Endothelial cell of umbilical vein (primary cell): ENCODE measurements at regions of chr12 and their contacts with region 1.

Region 1: DNA sequence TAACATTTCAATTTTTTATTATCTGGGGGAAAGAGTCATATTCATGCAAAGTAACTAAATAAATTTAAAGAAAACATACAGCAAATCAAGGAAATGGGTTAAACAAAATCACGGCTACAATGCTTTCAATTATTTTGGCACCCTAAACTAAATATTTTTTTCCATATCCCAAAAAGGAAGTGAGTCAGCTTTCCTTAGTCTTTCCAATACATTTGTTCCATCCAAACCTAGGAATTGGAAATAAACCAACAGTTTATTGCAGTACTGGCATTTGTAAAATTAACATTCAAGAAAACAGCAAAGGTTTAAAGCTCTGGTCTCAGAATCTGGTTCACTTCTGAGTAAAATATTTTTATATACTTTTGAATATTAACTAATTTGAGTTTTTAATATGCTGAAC is 89.2 kb downstream of the BCL2L14 start:
- DNase-seq: peak; percentile 82
- H3K4me3 ChIP-seq: peak overlapping the region in 1 of 3 experiments; percentile 6
- H3K27ac ChIP-seq: no peak overlapping the region
- H3K4me1 ChIP-seq: peaks cover 17% of the 10 kb centered on the region
- H3K27me3 ChIP-seq: no peaks in the 10 kb centered on the region
- CTCF ChIP-seq: no peak
- POLR2A ChIP-seq: no peak

Region 2: GRCh38 chr12:11568762-11569478 is 591.1 kb before region 1 on chr12:
- CTCF ChIA-PET with region 1: no interaction called
- POLR2A ChIA-PET with region 1: interaction called, 12 read pairs
- dilution Hi-C with region 1: no loop called
- intact Hi-C with region 1: no loop called
- DNase-seq: no peak
- H3K4me3 ChIP-seq: no peak overlapping the region
- H3K27ac ChIP-seq: no peak overlapping the region
- H3K4me1 ChIP-seq: no peaks in the 10 kb centered on the region
- H3K27me3 ChIP-seq: peaks cover 0 to 2% of the 10 kb centered on the region in 2 experiments
- CTCF ChIP-seq: no peak
- POLR2A ChIP-seq: no peak

Region 3: DNA sequence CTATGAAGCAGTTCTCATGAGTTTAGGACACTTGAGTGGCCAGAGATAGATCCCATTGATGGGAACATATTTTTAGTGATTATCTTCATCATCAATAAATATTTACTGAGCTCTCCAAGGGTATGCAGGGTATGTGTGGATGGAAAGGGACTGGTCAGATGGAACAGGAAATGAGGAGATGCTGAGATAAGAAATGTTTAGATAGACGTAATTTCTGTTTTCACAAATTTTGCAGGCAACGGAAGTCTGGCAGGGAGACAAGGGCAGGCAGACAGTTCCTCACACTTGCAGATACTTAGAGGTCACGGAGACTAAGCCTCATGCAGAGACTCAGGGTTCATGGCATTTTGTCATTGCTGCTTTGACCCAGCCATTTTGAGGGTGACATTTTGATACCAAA is 65.0 kb before region 1 on chr12:
- CTCF ChIA-PET with region 1: no interaction called
- POLR2A ChIA-PET with region 1: no interaction called
- dilution Hi-C with region 1: no loop called
- intact Hi-C with region 1: loop called (anchors 5 kb)
- DNase-seq: peak; percentile 72
- H3K4me3 ChIP-seq: no peak overlapping the region
- H3K27ac ChIP-seq: no peak overlapping the region
- H3K4me1 ChIP-seq: peaks cover 33% of the 10 kb centered on the region
- H3K27me3 ChIP-seq: no peaks in the 10 kb centered on the region
- CTCF ChIP-seq: no peak
- POLR2A ChIP-seq: no peak

Region 4: DNA sequence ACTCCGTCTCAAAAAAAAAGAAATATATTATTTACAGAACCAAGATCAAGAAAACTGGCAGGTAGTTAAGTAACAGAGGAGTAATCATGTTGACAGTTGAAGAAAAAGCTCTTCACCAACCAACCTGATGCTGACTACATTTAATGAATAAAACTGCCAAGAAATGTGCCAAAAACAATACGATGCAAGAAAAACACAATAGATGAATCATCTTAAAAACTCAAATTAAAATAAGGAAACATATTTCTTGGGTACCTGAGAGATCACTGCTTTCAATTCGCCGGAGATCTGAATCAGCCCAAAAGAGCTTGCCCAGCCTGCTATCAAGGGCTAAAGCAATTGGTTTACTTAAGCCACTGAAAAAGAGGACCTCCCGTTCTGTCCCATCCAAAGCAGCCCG is 12.9 kb before region 1 on chr12:
- CTCF ChIA-PET with region 1: interaction called, 10 read pairs
- POLR2A ChIA-PET with region 1: interaction called, 3 read pairs
- dilution Hi-C with region 1: no loop called
- intact Hi-C with region 1: no loop called
- DNase-seq: peak; percentile 84
- H3K4me3 ChIP-seq: no peak overlapping the region
- H3K27ac ChIP-seq: peak overlapping the region; percentile 24
- H3K4me1 ChIP-seq: peaks cover 10% of the 10 kb centered on the region
- H3K27me3 ChIP-seq: no peaks in the 10 kb centered on the region
- CTCF ChIP-seq: no peak
- POLR2A ChIP-seq: no peak